HCT116 (cell line): ENCODE measurements at regions of chr15 and their contacts with region 1.

Region 1: DNA sequence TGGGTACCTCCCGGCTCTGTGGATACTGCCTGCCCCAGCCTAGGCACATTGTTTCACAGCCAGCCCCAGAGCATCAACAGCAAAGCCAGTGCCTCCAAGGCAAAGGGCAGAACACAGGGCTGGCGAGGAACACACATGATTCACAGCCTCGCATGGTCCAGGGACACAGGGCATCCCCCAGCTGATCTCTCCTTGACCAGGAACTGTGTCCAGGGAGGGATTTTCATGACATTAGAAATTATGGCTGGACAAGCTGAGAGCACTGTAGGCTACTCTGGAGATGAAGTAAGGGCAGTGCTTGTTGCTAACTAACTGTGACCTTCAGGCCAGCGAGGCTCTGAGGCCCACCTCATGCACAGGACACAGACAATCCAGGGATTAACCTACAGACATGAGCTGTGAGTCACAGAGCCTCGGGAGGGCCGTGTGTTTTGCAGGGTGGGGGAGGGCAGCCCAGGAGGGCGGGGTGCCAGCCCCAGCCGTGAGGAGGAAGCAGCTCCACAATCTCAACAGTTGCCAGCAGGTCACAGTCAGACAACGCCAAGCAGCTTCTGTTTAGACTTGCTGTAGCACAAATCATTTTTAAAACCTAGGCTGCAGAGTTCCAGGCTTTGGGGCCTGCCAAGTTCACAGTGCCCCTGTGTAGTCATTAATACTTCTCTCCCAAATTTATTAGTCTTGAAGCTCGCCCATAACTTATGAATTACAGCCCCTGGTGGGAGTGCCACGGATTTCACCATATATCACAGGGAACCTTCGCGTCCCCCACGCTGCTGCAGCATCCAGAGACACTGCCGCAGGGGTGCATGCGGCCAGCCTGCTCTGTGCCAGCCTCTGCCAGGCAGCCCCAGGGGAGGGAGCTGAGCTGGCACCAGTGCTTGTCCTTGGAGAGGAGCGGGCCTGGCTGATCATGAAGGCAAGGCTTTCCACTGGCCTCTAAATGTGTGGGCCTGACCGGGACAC is 114.7 kb downstream of the ETFA start:
- DNase-seq: peak; percentile 36
- ATAC-seq: peak; percentile 71
- H3K4me3 ChIP-seq: peak overlapping the region in 1 of 2 experiments; percentile 29; a peak in 2 of 4 replicates
- H3K27ac ChIP-seq: peak overlapping the region; percentile 62
- H3K4me1 ChIP-seq: peaks cover 52 to 59% of the 10 kb centered on the region in 2 experiments
- H3K27me3 ChIP-seq: no peaks in the 10 kb centered on the region
- CTCF ChIP-seq: no peak
- POLR2A ChIP-seq: no peak
- RAD21 ChIP-seq: no peak

Region 2: DNA sequence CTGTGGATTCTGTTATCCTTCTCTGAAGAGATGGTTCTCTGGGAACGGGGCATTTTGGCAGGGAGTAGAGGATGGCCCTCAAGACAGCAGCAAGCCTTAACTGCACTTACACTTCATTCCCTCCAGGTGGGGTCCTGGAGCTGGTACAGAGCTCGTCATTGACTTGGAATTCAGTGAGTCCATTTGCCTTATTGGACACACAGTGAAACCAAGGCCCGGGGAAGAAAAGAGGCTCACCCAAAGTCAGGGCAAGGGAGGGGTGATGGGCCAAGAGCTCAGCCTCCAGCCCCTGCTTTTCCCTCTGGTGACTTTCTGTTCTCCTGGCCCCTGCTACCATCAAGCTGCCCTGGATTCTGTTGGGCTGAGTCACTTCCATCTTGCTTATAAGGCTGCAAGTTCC is 10.8 kb before region 1 on chr15:
- CTCF ChIA-PET with region 1: interaction called, 13 read pairs
- POLR2A ChIA-PET with region 1: interaction called, 3 read pairs
- RAD21 ChIA-PET with region 1: no interaction called
- intact Hi-C with region 1: no loop called
- DNase-seq: peak; percentile 77
- ATAC-seq: peak; percentile 93
- H3K4me3 ChIP-seq: no peak overlapping the region
- H3K27ac ChIP-seq: no peak overlapping the region
- H3K4me1 ChIP-seq: peaks cover 0 to 15% of the 10 kb centered on the region in 2 experiments; a peak in 2 of 4 replicates
- H3K27me3 ChIP-seq: no peaks in the 10 kb centered on the region
- CTCF ChIP-seq: peak; percentile 52 to 85 (median 79); a peak in 5 of 6 replicates
- POLR2A ChIP-seq: no peak
- RAD21 ChIP-seq: peak; percentile 74